ENCODE measurements at regions of chr10 and their contacts with region 1.

Region 1: GRCh38 chr10:113073549-113074189 is 123.6 kb downstream of the TCF7L2 start:
- DNase-seq: peak; percentile 97
- ATAC-seq: peak; percentile 90
- H3K4me3 ChIP-seq: no peak overlapping the region
- H3K27ac ChIP-seq: peak overlapping the region; percentile 67
- H3K4me1 ChIP-seq: peaks cover 11% of the 10 kb centered on the region
- H3K27me3 ChIP-seq: no peaks in the 10 kb centered on the region
- CTCF ChIP-seq: no peak
- POLR2A ChIP-seq: 0 out of 2 replicates have a peak, but pooled peaks have one; percentile 43
- RAD21 ChIP-seq: no peak; the same call in 1 of the 2 replicates

Region 2: DNA sequence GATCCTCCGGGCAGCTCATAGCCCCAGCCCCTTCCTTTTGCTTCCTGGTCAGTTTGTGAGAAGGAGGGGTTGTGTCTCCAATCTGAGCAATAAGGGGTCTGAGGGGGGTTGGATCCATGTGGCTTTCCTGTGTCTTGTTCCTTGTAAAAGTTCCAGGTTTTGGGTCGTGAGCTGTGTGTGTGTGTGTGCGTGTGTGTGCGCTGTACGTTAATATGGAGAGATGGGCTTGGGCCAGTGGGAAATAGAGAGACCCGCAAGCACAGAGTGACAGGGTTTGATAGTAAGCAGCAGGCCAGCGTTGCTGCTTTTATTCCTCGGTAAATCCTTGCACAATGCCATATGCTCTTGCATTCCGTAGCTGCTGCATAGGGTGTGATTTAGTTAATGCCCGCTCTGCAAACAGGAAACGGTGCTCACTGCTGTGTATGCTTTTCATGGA is 15.1 kb before region 1 on chr10:
- CTCF ChIA-PET with region 1: no interaction called
- POLR2A ChIA-PET with region 1: no interaction called
- dilution Hi-C with region 1: no loop called
- in situ Hi-C with region 1: no loop called
- intact Hi-C with region 1: loop called (anchors 2 kb)
- DNase-seq: peak; percentile 78
- ATAC-seq: peak; percentile 48
- H3K4me3 ChIP-seq: no peak overlapping the region
- H3K27ac ChIP-seq: peak overlapping the region; percentile 95
- H3K4me1 ChIP-seq: peaks cover 33% of the 10 kb centered on the region
- H3K27me3 ChIP-seq: no peaks in the 10 kb centered on the region
- CTCF ChIP-seq: no peak
- POLR2A ChIP-seq: no peak
- RAD21 ChIP-seq: no peak

Region 3: DNA sequence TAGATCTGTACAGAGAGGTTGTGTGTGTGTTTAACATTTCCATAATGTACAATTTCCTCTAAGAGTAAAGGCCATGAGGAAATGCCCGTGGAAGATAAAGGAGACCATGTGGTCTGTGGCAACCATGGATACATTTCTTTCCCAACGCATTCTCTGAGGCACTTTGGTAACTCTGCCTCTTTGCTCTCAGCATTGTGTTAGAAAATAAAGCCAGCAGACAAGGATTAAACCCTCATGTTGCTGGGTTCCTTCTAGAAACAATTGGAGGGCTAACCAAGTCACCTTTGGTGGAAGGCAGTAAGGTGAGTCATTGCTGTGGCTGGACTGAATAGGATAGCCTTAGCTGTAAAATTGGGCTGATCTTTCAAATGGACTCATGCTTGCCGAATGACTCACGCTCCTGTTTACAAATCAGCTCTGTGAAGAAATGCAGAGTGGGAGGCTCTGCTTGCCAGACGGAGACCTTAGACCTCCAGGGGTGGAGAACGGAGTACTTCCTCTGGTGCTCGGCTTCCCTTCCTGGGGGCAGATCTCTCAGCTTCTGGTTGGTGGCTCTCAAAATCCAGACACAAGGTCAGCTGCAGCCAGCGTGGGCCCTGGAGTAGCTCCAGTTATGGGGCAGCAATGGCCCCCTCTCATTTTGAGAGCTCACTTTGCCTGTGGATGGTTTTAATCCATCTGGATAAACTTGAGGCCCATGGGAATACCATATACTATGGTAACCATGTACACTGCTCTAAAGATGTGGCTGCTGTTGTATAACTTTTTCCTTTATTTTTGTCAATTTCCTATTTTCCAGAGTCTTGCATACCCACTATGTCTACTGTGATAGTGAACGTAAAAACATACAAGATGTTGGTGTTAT is 13.7 kb after region 1 on chr10:
- CTCF ChIA-PET with region 1: no interaction called
- POLR2A ChIA-PET with region 1: no interaction called
- dilution Hi-C with region 1: no loop called
- in situ Hi-C with region 1: no loop called
- intact Hi-C with region 1: loop called (anchors 2 kb)
- DNase-seq: peak; percentile 100
- ATAC-seq: peak; percentile 94
- H3K4me3 ChIP-seq: no peak overlapping the region
- H3K27ac ChIP-seq: peak overlapping the region; percentile 80
- H3K4me1 ChIP-seq: peaks cover 15% of the 10 kb centered on the region
- H3K27me3 ChIP-seq: no peaks in the 10 kb centered on the region
- CTCF ChIP-seq: no peak
- POLR2A ChIP-seq: 0 out of 2 replicates have a peak, but pooled peaks have one; percentile 20
- RAD21 ChIP-seq: no peak

Region 4: GRCh38 chr10:113521123-113521795 is 447.6 kb after region 1 on chr10:
- CTCF ChIA-PET with region 1: no interaction called
- POLR2A ChIA-PET with region 1: no interaction called
- dilution Hi-C with region 1: no loop called
- in situ Hi-C with region 1: no loop called
- intact Hi-C with region 1: no loop called
- DNase-seq: peak; percentile 70
- ATAC-seq: peak; percentile 96
- H3K4me3 ChIP-seq: no peak overlapping the region
- H3K27ac ChIP-seq: no peak overlapping the region
- H3K4me1 ChIP-seq: no peaks in the 10 kb centered on the region
- H3K27me3 ChIP-seq: 0 out of 2 replicates have a peak, but pooled peaks cover 2% of the 10 kb centered on the region
- CTCF ChIP-seq: peak; percentile 95
- POLR2A ChIP-seq: no peak
- RAD21 ChIP-seq: peak; percentile 89